ENCODE measurements at regions of chr6 and their contacts with region 1.

Region 1: GRCh38 chr6:156564127-156564806 is 212.9 kb upstream of the ARID1B start:
- DNase-seq: peak; percentile 93

Region 2: DNA sequence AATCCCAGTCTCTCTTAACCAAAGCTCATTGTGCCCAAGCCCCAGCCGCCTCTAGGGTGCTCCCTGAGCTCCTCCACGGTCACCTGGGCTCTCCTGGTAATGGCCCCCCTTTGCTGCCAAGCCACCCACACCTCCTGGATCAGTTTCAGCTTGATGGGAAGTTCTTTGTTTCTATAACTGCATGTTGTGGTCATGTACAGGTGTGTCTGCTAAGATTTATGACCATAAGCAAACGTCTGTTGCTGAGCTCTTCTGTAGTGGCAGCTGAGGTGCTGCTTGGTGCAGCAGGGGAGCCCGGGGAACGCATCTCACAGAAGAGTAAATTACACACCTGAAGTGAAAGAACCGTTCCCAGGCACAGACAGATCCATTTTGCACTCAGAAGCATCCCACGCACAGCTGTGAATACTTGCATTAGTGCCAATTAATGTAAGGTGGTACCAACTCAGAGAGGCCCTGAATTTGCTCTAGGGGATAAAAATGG is 18.3 kb after region 1 on chr6:
- intact Hi-C with region 1: no loop called
- DNase-seq: no peak

Region 3: GRCh38 chr6:156686995-156687788 is 122.9 kb after region 1 on chr6:
- intact Hi-C with region 1: loop called in 1 of 2 experiments (anchors 10 kb)
- DNase-seq: peak; percentile 96

Region 4: DNA sequence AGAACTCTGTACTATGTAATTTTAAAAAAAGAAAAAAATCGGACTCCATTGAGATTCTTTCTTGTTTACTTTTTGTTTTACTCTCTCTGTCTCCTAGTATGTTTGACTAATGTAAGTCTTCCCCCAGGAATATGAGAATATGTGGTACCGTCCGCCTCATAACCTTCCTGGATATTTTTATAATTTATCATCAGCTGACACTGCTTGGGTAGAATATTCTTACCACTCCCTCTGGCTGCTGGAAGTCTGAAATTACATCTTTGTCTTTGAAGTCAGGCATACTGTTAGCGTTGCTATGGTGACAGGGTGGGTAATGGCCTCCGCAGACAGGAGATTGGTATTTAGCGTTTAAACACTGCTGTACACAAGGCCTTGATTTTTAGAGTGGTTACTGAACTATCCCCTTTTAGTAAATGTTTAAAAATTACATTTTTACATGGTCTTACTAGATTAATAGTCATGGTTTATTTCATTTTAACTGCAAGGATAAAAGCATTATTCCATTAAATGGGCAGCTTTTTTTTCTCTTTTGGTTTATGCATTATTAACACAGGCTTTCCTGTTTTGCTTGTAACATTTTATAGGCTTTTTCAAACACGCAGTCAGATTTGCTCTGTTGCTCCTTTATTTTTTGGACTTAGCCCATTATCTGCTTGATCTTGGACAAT is 389.3 kb after region 1 on chr6:
- intact Hi-C with region 1: loop called in 1 of 2 experiments (anchors 10 kb)
- DNase-seq: no peak

Region 5: GRCh38 chr6:157021344-157021992 is 457.2 kb after region 1 on chr6:
- intact Hi-C with region 1: loop called in 1 of 2 experiments (anchors 10 kb)
- DNase-seq: peak; percentile 97

Region 6: GRCh38 chr6:157184202-157185020 is 620.1 kb after region 1 on chr6:
- intact Hi-C with region 1: loop called in 1 of 2 experiments (anchors 10 kb)
- DNase-seq: peak; percentile 88

Measured in posterior vena cava (tissue), 2 donors.